ENCODE measurements at regions of chr3 and their contacts with region 1.

Region 1: GRCh38 chr3:150763122-150763841 is at the start of gene SIAH2:
- DNase-seq: peak; percentile 95
- ATAC-seq: peak; percentile 76
- H3K4me3 Mint-ChIP-seq: peak within 1 kb of the TSS; percentile 100
- H3K27ac Mint-ChIP-seq: peak within 1 kb of the TSS; percentile 100
- H3K4me1 Mint-ChIP-seq: peaks cover 47% of the 10 kb centered on the region
- H3K27me3 Mint-ChIP-seq: no peaks in the 10 kb centered on the region
- CTCF ChIP-seq: no peak
- total RNA-seq, gene SIAH2: 90.3 to 91.1 TPM

Region 2: GRCh38 chr3:150408221-150409102 is 354.8 kb before region 1 on chr3 and contains the start of gene TSC22D2:
- CTCF ChIA-PET with region 1: no interaction called
- POLR2A ChIA-PET with region 1: interaction called, 13 read pairs
- intact Hi-C with region 1: no loop called
- DNase-seq: peak; percentile 93
- ATAC-seq: peak; percentile 73
- H3K4me3 Mint-ChIP-seq: peak within 1 kb of the TSS; percentile 84
- H3K27ac Mint-ChIP-seq: peak within 1 kb of the TSS; percentile 99
- H3K4me1 Mint-ChIP-seq: peaks cover 19% of the 10 kb centered on the region
- H3K27me3 Mint-ChIP-seq: no peaks in the 10 kb centered on the region
- CTCF ChIP-seq: no peak
- total RNA-seq, gene TSC22D2: 12.3 to 16.7 TPM

Region 3: GRCh38 chr3:150603153-150603979 is 159.9 kb before region 1 on chr3 and contains the start of gene SELENOT:
- CTCF ChIA-PET with region 1: no interaction called
- POLR2A ChIA-PET with region 1: interaction called, 5 read pairs
- intact Hi-C with region 1: loop called (anchors 5 kb)
- DNase-seq: peak; percentile 92
- ATAC-seq: peak; percentile 90
- H3K4me3 Mint-ChIP-seq: peak within 1 kb of the TSS; percentile 91
- H3K27ac Mint-ChIP-seq: peak within 1 kb of the TSS; percentile 97
- H3K4me1 Mint-ChIP-seq: peaks cover 58% of the 10 kb centered on the region
- H3K27me3 Mint-ChIP-seq: no peaks in the 10 kb centered on the region
- CTCF ChIP-seq: peak; percentile 32
- total RNA-seq, gene SELENOT: 77.6 to 89.8 TPM

Region 4: DNA sequence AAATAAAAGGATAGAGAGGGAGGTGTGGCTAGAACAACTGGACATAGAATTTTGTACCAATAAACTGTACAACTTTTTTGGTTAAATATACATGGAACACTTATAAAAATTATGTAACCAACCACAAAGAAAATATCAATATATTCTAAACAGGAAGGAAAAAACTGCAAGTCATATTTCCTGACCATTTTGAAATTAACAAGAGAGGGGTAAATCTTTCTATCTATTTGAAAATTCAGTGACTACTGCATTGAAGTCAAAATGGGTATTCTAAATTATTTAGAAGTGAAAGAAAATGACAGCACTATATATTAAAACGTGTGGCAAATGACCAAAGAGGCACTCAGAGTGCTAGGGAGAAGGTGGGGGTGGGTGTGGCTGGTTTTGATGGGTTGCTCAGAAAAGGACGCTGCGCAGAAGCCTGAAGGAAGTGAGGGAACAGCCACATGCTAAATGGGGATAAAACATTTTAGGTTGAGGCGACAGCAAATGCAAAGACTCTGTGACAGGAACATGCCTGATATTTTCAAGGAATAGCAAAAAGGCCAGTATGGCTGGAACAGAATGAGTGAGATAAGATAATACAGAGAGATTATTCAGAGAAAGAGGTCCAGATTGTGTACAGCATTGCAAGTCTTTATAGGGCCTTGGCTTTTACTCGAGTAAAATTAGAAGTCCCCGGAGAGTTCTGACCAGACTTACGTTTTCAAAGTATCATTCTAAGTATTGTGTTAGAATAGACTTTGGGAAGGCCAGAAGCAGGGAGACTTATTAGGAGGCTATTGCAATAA is 100.7 kb before region 1 on chr3:
- CTCF ChIA-PET with region 1: no interaction called
- POLR2A ChIA-PET with region 1: no interaction called
- intact Hi-C with region 1: no loop called
- DNase-seq: no peak
- ATAC-seq: no peak
- H3K4me3 Mint-ChIP-seq: no peak overlapping the region
- H3K27ac Mint-ChIP-seq: no peak overlapping the region
- H3K4me1 Mint-ChIP-seq: peaks cover 8% of the 10 kb centered on the region
- H3K27me3 Mint-ChIP-seq: peaks cover 7% of the 10 kb centered on the region
- CTCF ChIP-seq: no peak

Region 5: DNA sequence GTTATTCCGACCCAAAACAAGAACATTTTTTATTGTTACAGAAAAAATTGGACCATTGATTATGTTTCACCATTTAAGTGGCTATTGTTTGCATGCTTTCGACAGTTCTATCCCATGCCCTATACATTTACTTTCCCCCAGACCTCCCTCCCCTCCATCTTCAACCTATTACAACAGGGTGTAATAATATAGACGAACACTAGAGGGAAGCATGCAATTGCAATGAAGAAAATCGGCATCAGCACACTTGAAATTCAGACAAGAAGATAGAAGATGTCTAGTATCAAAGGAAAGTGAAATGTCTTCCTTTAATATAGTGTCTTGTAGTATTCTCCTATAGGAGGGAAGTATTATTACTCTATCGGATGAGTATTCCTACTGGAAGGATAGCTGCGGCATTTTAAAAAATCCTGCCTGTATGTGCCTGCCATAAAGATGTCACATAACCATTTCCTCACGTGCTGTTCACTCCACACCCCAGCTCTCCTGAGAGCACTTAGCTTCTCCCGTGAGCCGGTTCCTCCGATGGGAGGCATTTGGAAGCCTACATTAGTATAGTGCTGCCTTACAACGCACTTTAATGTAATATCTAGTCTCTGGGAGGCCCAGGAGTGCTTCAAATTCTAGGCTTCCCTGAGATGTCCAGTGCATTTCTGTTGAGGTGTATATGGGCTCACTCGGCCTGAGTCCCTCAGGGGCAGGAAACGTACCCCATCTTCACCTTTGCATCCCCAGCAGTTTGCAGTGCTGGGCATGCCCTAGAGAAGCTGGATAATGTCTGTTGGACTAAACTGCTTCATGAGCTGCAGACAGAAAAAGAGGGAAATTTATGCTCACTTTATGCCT is 41.8 kb before region 1 on chr3:
- CTCF ChIA-PET with region 1: interaction called, 52 read pairs
- POLR2A ChIA-PET with region 1: interaction called, 18 read pairs
- intact Hi-C with region 1: loop called (anchors 1 kb)
- DNase-seq: no peak
- ATAC-seq: peak; percentile 85
- H3K4me3 Mint-ChIP-seq: no peak overlapping the region
- H3K27ac Mint-ChIP-seq: no peak overlapping the region
- H3K4me1 Mint-ChIP-seq: peaks cover 19% of the 10 kb centered on the region
- H3K27me3 Mint-ChIP-seq: no peaks in the 10 kb centered on the region
- CTCF ChIP-seq: peak; percentile 77

Region 6: GRCh38 chr3:150746791-150747590 is 16.3 kb before region 1 on chr3:
- CTCF ChIA-PET with region 1: interaction called, 3 read pairs
- POLR2A ChIA-PET with region 1: interaction called, 10 read pairs
- intact Hi-C with region 1: no loop called
- DNase-seq: no peak
- ATAC-seq: no peak
- H3K4me3 Mint-ChIP-seq: no peak overlapping the region
- H3K27ac Mint-ChIP-seq: peak overlapping the region; percentile 67
- H3K4me1 Mint-ChIP-seq: peaks cover 89% of the 10 kb centered on the region
- H3K27me3 Mint-ChIP-seq: no peaks in the 10 kb centered on the region
- CTCF ChIP-seq: no peak

Region 7: GRCh38 chr3:150787741-150788370 is 24.6 kb after region 1 on chr3:
- CTCF ChIA-PET with region 1: interaction called, 46 read pairs
- POLR2A ChIA-PET with region 1: interaction called, 76 read pairs
- intact Hi-C with region 1: loop called (anchors 1 kb)
- DNase-seq: peak; percentile 93
- ATAC-seq: peak; percentile 72
- H3K4me3 Mint-ChIP-seq: no peak overlapping the region
- H3K27ac Mint-ChIP-seq: no peak overlapping the region
- H3K4me1 Mint-ChIP-seq: peaks cover 41% of the 10 kb centered on the region
- H3K27me3 Mint-ChIP-seq: peaks cover 6% of the 10 kb centered on the region
- CTCF ChIP-seq: peak; percentile 95

Region 8: GRCh38 chr3:150870396-150870795 is 107.1 kb after region 1 on chr3:
- CTCF ChIA-PET with region 1: no interaction called
- POLR2A ChIA-PET with region 1: no interaction called
- intact Hi-C with region 1: no loop called
- DNase-seq: no peak
- ATAC-seq: no peak
- H3K4me3 Mint-ChIP-seq: no peak overlapping the region
- H3K27ac Mint-ChIP-seq: no peak overlapping the region
- H3K4me1 Mint-ChIP-seq: peaks cover under 1% of the 10 kb centered on the region
- H3K27me3 Mint-ChIP-seq: peaks cover 7% of the 10 kb centered on the region
- CTCF ChIP-seq: no peak